ENCODE measurements at regions of chr16 and their contacts with region 1.

Region 1: DNA sequence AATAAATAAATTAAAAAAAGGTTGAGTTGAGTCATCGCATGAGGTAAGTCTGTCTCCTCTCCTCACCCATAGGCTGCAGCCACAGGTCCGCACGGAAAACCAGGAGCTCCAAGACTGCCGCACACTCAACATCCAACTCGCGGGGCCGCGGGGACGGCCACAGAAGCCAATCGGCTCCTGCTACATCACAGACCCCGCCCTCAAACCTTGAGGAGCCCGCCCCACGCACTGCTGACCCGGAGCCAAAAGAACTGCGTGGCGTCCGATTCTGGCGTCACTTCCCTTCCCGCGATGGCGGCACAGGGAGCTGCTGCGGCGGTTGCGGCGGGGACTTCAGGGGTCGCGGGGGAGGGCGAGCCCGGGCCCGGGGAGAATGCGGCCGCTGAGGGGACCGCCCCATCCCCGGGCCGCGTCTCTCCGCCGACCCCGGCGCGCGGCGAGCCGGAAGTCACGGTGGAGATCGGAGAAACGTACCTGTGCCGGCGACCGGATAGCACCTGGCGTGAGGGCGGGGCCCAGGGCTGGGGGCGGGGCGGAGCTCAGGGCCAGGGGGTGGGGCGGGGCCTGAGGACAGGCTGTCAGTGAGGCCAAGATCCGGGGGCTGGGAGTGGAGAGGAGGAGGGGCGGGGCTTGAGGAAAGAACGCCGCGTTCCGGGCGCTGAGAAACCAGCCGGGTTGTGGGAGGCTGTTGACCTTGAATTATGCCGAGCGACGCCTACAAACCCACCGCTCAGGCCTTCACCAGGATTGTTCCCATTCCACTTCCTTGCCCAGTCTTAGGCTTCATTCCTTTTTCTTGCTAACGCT is at the start of gene KAT8:
- DNase-seq: peak; percentile 92 to 99 (median 97)
- ATAC-seq: peak; percentile 92
- H3K4me3 ChIP-seq: peak within 1 kb of the TSS; percentile 53 to 93
- H3K4me3 Mint-ChIP-seq: peak within 1 kb of the TSS; percentile 74
- H3K27ac ChIP-seq: peak within 1 kb of the TSS; percentile 83 to 96
- H3K27ac Mint-ChIP-seq: peak within 1 kb of the TSS; percentile 95
- H3K4me1 ChIP-seq: peaks cover 11% of the 10 kb centered on the region
- H3K4me1 Mint-ChIP-seq: peaks cover 18% of the 10 kb centered on the region
- H3K27me3 ChIP-seq: no peaks in the 10 kb centered on the region
- H3K27me3 Mint-ChIP-seq: no peaks in the 10 kb centered on the region
- CTCF ChIP-seq: no peak
- total RNA-seq, gene KAT8: 105 to 107 TPM

Region 2: GRCh38 chr16:30997000-30997886 is 120.4 kb before region 1 on chr16:
- CTCF ChIA-PET with region 1: no interaction called
- POLR2A ChIA-PET with region 1: no interaction called
- intact Hi-C with region 1: loop called in 1 of 2 experiments (anchors 1 kb)
- DNase-seq: peak; percentile 67 to 88 (median 80)
- ATAC-seq: peak; percentile 99
- H3K4me3 ChIP-seq: peak overlapping the region; percentile 61 to 93
- H3K4me3 Mint-ChIP-seq: peak overlapping the region; percentile 85
- H3K27ac ChIP-seq: peak overlapping the region; percentile 40 to 55
- H3K27ac Mint-ChIP-seq: peak overlapping the region; percentile 90
- H3K4me1 ChIP-seq: peaks cover 11% of the 10 kb centered on the region
- H3K4me1 Mint-ChIP-seq: peaks cover 10% of the 10 kb centered on the region
- H3K27me3 ChIP-seq: no peaks in the 10 kb centered on the region
- H3K27me3 Mint-ChIP-seq: no peaks in the 10 kb centered on the region
- CTCF ChIP-seq: no peak